Caco-2 (cell line): ENCODE measurements at regions of chr2 and their contacts with region 1.

Region 1: DNA sequence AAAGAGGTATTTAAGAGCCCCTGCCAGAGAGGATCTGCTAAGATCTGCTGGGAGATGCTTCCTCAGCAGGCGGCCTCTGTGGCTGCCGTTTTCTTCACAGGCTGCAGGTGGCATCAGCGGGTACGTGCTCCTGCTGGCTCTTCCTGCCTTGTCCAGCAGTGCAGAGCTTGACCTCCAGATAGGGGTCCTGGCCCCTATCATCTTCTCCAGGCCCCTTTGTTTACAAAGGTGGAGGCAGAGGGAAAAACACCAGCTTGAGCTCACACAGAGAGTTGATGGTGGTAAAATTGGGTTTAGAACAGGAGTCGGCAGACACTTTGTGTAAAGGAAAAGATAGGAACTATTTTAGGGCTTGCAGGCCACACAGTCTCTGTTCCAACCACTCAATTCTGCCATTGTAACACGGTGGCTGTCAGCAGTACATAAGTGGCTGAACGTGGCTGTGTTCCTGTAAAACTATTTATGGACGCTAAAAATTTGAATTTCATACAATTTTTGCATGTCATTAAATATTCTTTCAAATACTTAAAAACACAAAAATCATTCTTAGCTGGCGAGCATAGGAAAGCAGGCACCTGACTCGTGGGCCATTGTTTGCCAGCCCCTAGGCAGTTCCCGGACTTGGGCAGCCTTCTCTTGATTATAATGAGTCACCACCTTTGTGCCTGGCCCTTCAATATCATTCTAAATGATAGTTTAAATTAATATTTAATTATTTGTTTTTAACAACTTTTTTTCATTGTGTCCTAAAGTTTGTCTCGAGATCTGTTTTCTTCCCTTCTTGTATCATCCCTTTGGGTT is 98.2 kb upstream of the B3GNT7 start:
- DNase-seq: peak; percentile 56 to 59
- H3K4me3 ChIP-seq: no peak overlapping the region
- H3K4me3 Mint-ChIP-seq: no peak overlapping the region
- H3K27ac Mint-ChIP-seq: no peak overlapping the region
- H3K4me1 ChIP-seq: no peaks in the 10 kb centered on the region
- H3K4me1 Mint-ChIP-seq: peaks cover 6% of the 10 kb centered on the region
- H3K27me3 ChIP-seq: no peaks in the 10 kb centered on the region
- H3K27me3 Mint-ChIP-seq: no peaks in the 10 kb centered on the region
- CTCF ChIP-seq: peak; percentile 50 to 78

Region 2: DNA sequence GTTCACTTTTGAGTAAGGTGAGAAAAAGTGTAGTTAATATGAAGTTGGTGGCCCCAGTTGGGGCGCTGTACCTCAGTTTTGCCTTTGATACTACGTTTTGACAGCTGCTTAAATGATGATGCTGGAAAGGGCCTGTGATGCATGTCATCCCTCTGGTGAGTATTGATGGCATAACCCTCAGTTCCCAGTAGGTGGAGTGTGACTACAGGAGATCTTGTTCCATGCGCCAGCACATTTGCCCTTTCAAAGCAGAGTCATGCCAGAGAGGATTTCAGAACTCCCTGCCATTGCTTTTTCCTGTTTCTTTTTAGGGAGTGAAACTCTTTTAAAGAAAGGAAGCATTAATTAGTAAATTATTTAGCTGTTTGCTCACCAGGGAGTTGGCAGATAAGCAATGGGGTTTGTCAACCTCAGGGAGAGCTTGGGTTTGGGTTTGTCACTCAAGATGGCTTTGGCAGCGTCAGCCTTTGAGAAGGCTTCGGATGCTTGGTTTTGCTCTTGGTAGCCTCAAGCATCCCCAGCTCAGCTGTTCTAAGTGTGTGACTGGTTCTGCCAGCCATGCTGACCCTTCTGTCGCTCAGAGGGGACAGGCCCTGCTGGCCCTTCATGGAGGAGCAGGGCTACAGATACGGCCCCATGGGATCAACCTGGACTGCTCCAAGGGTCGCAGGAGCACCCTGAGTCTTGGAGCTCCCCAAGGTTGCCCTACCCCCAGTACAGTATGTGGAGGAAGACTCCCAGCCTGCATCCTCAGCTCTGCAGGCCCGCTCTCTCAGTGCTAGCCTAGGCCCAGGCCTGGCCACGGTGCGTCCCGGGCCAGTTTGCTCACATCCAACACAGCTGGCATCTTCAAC is 69.8 kb before region 1 on chr2:
- CTCF ChIA-PET with region 1: no interaction called
- POLR2A ChIA-PET with region 1: no interaction called
- intact Hi-C with region 1: loop called (anchors 2 kb)
- DNase-seq: peak; percentile 59 to 63
- H3K4me3 ChIP-seq: no peak overlapping the region
- H3K4me3 Mint-ChIP-seq: no peak overlapping the region
- H3K27ac Mint-ChIP-seq: no peak overlapping the region
- H3K4me1 ChIP-seq: no peaks in the 10 kb centered on the region
- H3K4me1 Mint-ChIP-seq: peaks cover 6% of the 10 kb centered on the region
- H3K27me3 ChIP-seq: no peaks in the 10 kb centered on the region
- H3K27me3 Mint-ChIP-seq: no peaks in the 10 kb centered on the region
- CTCF ChIP-seq: peak; percentile 68 to 71

Region 3: DNA sequence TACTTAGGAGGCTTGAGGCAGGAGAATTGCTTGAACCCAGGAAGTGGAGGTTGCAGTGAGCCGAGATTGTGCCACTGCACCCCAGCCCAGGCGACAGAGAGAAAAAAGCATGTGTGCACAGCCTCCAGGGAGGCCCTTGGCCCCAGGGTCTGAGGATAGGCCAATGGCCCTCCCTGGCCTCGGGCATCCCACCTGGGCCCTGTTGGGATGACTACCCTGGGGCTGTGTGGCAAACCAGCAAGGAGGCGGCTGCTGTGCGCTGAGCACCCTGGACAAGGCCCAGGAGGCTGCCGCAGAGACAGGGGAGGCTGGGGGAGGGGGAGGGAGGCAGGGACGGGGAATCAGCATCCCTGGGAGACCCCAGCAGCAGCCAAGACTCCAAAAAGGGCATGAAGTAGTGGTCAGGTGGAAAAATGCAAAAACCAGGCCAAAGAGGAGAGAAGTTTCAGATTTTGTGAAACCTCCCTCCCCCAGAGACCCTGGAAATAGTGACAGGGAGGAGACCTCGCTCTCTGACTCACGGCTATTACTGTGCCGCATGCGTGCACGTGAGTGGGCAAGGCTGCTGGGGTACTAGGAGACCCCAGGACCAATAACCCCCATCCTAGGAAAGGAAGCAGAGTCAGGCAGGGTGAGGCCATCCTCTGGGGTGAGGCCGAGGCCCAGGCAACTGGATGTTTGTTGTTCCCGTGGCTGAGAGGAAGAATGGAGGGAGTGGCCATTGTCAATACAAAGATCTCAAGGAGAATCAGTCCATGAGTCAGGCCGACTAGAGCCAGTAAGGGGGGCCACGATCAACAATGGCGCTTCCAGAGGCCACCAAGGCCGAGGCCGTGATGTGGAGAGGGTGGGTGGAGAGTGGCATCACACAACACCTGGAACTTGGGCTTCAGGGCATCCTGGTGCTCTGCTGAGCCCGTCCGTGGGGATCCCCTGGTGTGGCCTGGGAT is 82.2 kb after region 1 on chr2:
- CTCF ChIA-PET with region 1: interaction called, 11 read pairs
- POLR2A ChIA-PET with region 1: no interaction called
- intact Hi-C with region 1: no loop called
- DNase-seq: no peak
- H3K4me3 ChIP-seq: no peak overlapping the region
- H3K4me3 Mint-ChIP-seq: no peak overlapping the region
- H3K27ac Mint-ChIP-seq: no peak overlapping the region
- H3K4me1 ChIP-seq: peaks cover 15% of the 10 kb centered on the region
- H3K4me1 Mint-ChIP-seq: no peaks in the 10 kb centered on the region
- H3K27me3 ChIP-seq: no peaks in the 10 kb centered on the region
- H3K27me3 Mint-ChIP-seq: no peaks in the 10 kb centered on the region
- CTCF ChIP-seq: no peak

Region 4: DNA sequence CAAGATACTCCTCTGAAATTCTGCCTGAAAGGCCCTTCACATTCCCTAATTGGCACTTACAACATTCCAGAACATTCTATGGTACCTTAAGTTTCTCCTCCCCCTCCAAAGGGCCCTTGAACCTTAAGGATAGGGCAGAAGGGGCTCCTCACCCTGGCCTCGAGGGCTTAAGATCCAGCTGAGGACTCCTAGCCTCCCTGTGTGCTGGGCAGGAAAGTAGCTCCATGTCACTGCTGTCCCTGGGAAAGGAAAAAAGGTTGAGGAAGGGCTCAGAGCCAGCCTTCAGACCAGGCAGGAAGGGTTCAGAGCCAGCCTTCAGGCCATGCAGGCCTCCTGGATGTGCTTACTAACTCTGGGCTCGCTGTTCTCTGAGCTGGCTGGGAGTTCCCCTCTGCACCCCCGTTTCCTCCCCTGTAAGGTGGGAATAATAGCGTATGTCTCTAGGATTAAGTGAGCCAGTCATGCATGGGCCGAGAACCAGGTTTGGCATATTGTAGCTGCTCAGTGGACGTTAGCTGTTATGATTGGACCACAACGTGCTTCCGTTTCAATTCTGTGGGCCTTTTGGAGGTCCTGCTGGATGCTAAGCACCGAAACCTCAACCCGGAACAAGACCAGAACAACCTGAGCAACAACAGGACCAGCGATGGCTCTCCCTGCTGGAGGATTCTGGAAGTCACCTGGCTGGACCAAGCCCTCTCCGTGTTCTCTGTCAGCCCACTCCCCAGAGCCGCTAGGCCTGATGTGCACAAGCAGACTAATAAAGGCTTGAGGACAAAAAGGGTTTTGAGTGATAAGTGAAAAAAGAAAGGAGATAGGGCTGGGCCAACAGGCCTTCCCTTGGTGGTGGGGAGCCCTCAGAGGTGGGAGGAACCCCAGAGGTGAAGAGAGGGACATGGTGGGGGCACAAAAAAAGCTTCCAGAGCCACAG is 97.2 kb after region 1 on chr2:
- CTCF ChIA-PET with region 1: no interaction called
- POLR2A ChIA-PET with region 1: no interaction called
- intact Hi-C with region 1: loop called (anchors 1 kb)
- DNase-seq: peak in 1 of 2 experiments; percentile 44
- H3K4me3 ChIP-seq: no peak overlapping the region
- H3K4me3 Mint-ChIP-seq: peak overlapping the region; percentile 67
- H3K27ac Mint-ChIP-seq: no peak overlapping the region
- H3K4me1 ChIP-seq: peaks cover 9% of the 10 kb centered on the region; the same call in 1 of the 2 replicates
- H3K4me1 Mint-ChIP-seq: peaks cover 6% of the 10 kb centered on the region
- H3K27me3 ChIP-seq: no peaks in the 10 kb centered on the region
- H3K27me3 Mint-ChIP-seq: no peaks in the 10 kb centered on the region
- CTCF ChIP-seq: peak in 1 of 2 experiments; percentile 12

Region 5: DNA sequence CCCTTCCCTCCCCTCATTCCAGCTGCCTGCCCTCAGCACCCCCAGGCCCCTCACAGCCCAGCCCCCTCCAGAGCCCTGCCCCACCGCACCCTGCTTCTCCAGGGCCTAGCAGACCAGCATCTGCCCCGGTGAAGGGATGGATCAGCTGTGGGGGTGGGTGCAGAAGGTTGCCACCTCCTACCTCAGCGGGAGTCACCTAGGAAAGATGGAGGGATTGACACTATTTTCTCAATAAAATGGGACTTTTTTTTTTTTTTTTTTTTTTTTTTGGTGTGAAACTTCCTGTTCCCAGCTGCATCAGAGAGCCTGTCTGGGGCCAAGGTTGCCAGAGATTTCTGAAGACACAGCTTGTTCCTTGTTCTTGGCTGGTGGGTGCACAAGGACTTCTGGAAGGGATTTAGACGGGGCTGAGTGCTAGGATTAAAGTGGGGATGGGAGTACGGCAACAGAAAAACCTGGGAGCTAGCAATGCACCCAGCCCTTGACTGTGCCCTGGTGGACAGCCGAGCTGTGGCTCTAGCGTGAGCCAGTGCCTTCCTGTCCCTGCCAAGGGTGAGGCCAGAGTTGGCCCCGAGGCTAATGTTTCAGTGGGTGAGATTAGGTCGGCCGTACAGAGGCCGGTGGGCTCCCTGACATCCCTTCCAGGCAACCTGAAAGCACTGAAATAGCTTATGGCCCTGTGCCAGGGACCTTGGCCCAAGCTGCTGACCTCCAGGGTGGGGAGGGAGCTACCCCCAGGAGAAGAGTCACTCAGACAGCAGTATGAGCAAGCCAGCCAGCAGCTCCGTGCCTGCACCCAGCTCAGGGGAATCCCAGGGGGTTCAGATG is 102.8 kb after region 1 on chr2:
- CTCF ChIA-PET with region 1: interaction called, 11 read pairs
- POLR2A ChIA-PET with region 1: no interaction called
- intact Hi-C with region 1: no loop called
- DNase-seq: no peak
- H3K4me3 ChIP-seq: no peak overlapping the region
- H3K4me3 Mint-ChIP-seq: no peak overlapping the region
- H3K27ac Mint-ChIP-seq: no peak overlapping the region
- H3K4me1 ChIP-seq: peaks cover 7% of the 10 kb centered on the region; the same call in 1 of the 2 replicates
- H3K4me1 Mint-ChIP-seq: peaks cover under 1% of the 10 kb centered on the region
- H3K27me3 ChIP-seq: no peaks in the 10 kb centered on the region
- H3K27me3 Mint-ChIP-seq: no peaks in the 10 kb centered on the region
- CTCF ChIP-seq: no peak

Region 6: DNA sequence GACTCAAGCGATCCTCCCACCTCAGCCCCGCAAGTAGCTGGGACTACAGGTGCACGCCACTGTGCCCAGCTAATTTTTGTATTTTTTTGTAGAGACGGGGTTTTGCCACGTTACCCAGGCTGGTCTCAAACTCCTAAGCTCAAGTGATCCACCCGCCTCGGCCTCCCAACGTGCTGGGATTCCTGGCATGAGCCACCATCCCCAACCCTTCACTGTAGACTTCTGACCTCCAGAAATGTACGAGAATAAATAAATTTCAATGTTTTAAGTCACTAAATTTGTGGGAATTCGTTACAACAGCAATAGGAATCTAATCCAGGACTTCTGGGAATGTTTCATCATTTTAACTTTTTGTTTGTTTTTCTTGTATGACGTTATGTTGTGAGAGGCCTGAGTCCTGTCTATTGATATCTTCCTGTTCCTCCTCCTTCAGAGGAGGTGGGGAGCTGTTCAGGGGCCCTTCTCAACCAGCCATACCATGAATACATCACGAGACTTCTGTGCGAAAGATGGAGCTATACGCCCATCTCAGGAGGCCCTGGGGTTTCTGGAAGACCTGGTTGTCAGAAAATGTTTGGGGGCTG is 335.3 kb after region 1 on chr2:
- CTCF ChIA-PET with region 1: no interaction called
- POLR2A ChIA-PET with region 1: no interaction called
- intact Hi-C with region 1: no loop called
- DNase-seq: no peak
- H3K4me3 ChIP-seq: no peak overlapping the region
- H3K4me3 Mint-ChIP-seq: no peak overlapping the region
- H3K27ac Mint-ChIP-seq: no peak overlapping the region
- H3K4me1 ChIP-seq: peaks cover 4% of the 10 kb centered on the region; the same call in 1 of the 2 replicates
- H3K4me1 Mint-ChIP-seq: no peaks in the 10 kb centered on the region
- H3K27me3 ChIP-seq: no peaks in the 10 kb centered on the region
- H3K27me3 Mint-ChIP-seq: no peaks in the 10 kb centered on the region
- CTCF ChIP-seq: no peak